ENCODE measurements at regions of chr7 and their contacts with region 1.

Region 1: GRCh38 chr7:106736508-106737201 is 75.7 kb upstream of the CCDC71L start:
- DNase-seq: no peak
- ATAC-seq: peak; percentile 78 to 82
- H3K4me3 ChIP-seq: no peak overlapping the region
- H3K27ac ChIP-seq: no peak overlapping the region
- H3K4me1 ChIP-seq: no peaks in the 10 kb centered on the region
- H3K27me3 ChIP-seq: no peaks in the 10 kb centered on the region

Region 2: GRCh38 chr7:106542550-106543220 is 194.0 kb before region 1 on chr7:
- intact Hi-C with region 1: loop called in 2 of 4 experiments (anchors 5 to 10 kb)
- DNase-seq: peak in 2 of 3 donors; percentile 46 to 53
- ATAC-seq: peak; percentile 94 to 97
- H3K4me3 ChIP-seq: no peak overlapping the region
- H3K27ac ChIP-seq: no peak overlapping the region
- H3K4me1 ChIP-seq: no peaks in the 10 kb centered on the region
- H3K27me3 ChIP-seq: no peaks in the 10 kb centered on the region

Region 3: DNA sequence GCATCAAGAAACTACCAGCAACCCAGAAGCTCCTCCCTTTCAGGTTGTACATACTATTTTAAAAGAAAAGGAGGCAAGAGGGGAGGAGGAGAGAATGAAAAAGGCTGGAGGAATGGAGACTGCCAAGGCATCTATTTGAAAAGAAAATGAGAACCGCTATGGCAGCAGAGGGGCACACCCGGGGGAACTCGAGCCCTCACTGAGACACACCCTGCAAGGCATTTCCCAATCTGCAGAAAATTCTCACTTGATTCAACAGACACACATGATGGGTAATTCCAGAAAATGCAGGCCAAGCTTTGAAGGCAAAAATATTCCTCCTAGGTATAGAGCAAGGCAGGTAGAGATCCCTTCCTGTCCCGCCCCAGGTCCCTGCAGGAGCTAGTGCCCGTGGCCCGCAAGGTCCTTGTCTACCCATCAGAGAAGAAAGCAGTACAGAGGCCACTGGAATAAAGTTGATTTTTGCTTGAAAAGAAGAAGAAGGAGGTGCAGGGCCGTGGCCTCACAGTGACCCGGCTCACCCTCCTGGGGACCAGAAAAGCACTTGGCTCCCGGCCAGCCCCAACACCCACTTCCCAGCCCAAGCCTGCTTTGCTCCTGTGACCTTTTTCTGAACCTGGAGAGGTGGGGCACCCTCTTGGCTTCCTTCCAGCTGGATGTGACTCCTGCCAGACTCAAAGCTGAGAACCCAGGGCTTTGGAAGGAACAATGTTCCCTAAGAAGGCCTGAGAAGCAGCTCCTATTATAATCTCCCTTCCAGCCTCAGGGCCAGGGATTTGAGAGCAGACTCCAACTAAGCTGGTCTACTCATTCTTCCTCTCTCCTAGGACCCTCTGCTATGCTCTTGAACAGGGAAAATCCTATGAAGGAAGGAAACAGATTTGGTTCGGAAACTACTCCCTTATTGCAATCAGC is 122.2 kb after region 1 on chr7:
- intact Hi-C with region 1: no loop called
- DNase-seq: peak; percentile 60 to 87 (median 84)
- ATAC-seq: peak; percentile 57 to 89
- H3K4me3 ChIP-seq: no peak overlapping the region
- H3K27ac ChIP-seq: no peak overlapping the region
- H3K4me1 ChIP-seq: no peaks in the 10 kb centered on the region
- H3K27me3 ChIP-seq: no peaks in the 10 kb centered on the region